ENCODE measurements at regions of chr4 and their contacts with region 1.

Region 1: GRCh38 chr4:8897251-8898167 is 25.9 kb upstream of the HMX1 start:
- DNase-seq: no peak
- H3K4me3 ChIP-seq: no peak overlapping the region
- H3K27ac ChIP-seq: no peak overlapping the region
- H3K27me3 ChIP-seq: peaks cover 0 to 72% (median 43%) of the 10 kb centered on the region in 45 donors
- CTCF ChIP-seq: no peak

Region 2: GRCh38 chr4:8688041-8688937 is 209.2 kb before region 1 on chr4:
- intact Hi-C with region 1: loop called in 1 of 2 experiments (anchors 5 kb)
- DNase-seq: peak in 5 of 10 donors; percentile 17 to 69 (median 38)
- H3K4me3 ChIP-seq: peak overlapping the region in 1 of 59 donors; percentile 17
- H3K27ac ChIP-seq: no peak overlapping the region
- H3K27me3 ChIP-seq: peaks cover 0 to 36% (median 14%) of the 10 kb centered on the region in 45 donors
- CTCF ChIP-seq: peak in 54 of 56 donors; percentile 40 to 80 (median 62)

Region 3: GRCh38 chr4:9924750-9925149 is 1027.2 kb after region 1 on chr4:
- intact Hi-C with region 1: no loop called
- DNase-seq: peak in 6 of 10 donors; percentile 48 to 65 (median 55)
- H3K4me3 ChIP-seq: no peak overlapping the region
- H3K27ac ChIP-seq: no peak overlapping the region
- H3K27me3 ChIP-seq: no peaks in the 10 kb centered on the region
- CTCF ChIP-seq: no peak